MCF 10A (cell line): ENCODE measurements at regions of chr1 and their contacts with region 1.

Region 1: GRCh38 chr1:42958488-42959319 is at the start of gene SLC2A1:
- DNase-seq: peak; percentile 95
- H3K4me3 Mint-ChIP-seq: peak within 1 kb of the TSS; percentile 91
- H3K27ac Mint-ChIP-seq: peak within 1 kb of the TSS; percentile 93
- H3K4me1 Mint-ChIP-seq: peaks cover 39% of the 10 kb centered on the region
- H3K27me3 Mint-ChIP-seq: no peaks in the 10 kb centered on the region
- CTCF ChIP-seq: no peak
- total RNA-seq, gene SLC2A1: 87.5 and 95.0 TPM in 2 replicates

Region 2: DNA sequence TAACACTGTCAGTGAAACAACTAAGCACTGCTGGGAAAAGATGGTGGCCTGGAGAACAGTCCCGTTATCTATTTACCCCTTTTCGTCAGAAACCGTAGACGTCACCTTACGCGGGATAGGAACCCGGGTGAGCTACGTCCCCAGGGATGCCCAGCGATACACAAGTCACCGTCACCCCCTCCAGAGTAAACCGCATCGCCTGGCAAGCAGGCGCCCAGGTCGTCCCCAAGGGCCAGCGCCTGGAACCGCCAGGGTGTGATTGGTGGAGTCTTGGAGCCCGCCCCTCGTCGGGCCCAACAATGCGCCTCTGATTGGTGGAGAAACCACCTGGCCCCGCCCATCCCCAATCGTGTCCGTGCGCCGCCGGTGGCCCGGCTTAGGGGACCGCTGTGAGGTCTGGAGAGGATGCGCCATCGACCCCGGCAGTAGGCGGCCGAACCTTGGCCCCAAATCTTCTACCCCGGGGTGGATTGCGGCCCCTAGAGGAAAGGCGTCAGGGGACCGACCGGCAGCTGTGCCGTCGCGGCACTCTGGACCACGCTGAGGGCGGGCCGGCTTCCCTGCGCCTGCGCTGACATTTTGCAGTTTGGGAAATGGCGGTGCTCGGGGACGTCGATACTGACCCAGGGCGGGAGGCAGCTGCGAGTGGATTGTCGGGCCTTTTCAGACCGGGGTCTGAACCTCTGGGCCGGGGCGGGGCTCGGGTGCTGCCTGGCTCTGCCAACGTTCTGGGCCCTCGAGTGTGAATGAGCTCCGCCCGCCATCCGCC is 34.4 kb before region 1 on chr1:
- CTCF ChIA-PET with region 1: interaction called, 5 read pairs
- POLR2A ChIA-PET with region 1: interaction called, 16 read pairs
- intact Hi-C with region 1: loop called (anchors 5 kb)
- DNase-seq: no peak
- H3K4me3 Mint-ChIP-seq: peak overlapping the region; percentile 54
- H3K27ac Mint-ChIP-seq: no peak overlapping the region
- H3K4me1 Mint-ChIP-seq: peaks cover 18% of the 10 kb centered on the region
- H3K27me3 Mint-ChIP-seq: no peaks in the 10 kb centered on the region
- CTCF ChIP-seq: no peak

Region 3: GRCh38 chr1:42936309-42937078 is 22.2 kb before region 1 on chr1:
- CTCF ChIA-PET with region 1: interaction called, 14 read pairs
- POLR2A ChIA-PET with region 1: interaction called, 403 read pairs
- intact Hi-C with region 1: loop called (anchors 1 kb)
- DNase-seq: peak; percentile 94
- H3K4me3 Mint-ChIP-seq: peak overlapping the region; percentile 38
- H3K27ac Mint-ChIP-seq: peak overlapping the region; percentile 87
- H3K4me1 Mint-ChIP-seq: peaks cover 72% of the 10 kb centered on the region
- H3K27me3 Mint-ChIP-seq: no peaks in the 10 kb centered on the region
- CTCF ChIP-seq: no peak

Region 4: DNA sequence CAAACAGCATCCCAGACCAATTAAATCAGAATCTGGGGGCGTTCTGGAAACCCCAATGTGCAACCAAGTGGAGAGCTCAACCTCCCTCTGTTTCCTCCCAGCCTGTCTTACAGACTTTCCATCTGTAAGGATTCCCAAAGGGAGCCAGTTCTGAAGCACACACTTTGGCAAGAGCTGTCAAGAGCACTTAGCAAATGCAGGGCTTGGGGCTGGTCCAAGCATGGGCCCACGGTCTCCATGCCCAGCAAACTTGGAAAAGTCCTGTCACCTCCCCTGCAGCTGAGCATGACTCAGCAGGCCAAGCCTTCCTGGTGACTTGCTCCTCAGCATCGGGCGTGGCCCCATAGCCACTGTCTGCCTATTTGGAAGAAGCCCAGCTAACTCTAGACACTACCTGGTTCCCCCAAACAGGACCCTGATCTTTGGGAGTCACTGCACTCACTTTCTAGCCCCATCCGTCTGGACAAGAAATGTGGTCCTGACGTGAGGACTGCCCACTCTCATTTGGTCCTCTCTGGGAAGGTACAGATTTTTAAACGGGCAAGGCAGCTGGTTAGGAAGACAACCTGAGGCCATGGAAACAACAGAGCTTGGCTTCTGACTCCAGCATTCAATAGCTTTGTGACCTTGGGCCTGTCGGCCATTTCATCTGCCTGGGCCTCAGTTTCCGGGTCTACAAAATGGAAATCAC is 16.9 kb before region 1 on chr1:
- CTCF ChIA-PET with region 1: interaction called, 14 read pairs
- POLR2A ChIA-PET with region 1: interaction called, 403 read pairs
- intact Hi-C with region 1: loop called (anchors 1 kb)
- DNase-seq: peak; percentile 94
- H3K4me3 Mint-ChIP-seq: peak overlapping the region; percentile 54
- H3K27ac Mint-ChIP-seq: peak overlapping the region; percentile 58
- H3K4me1 Mint-ChIP-seq: peaks cover 78% of the 10 kb centered on the region
- H3K27me3 Mint-ChIP-seq: no peaks in the 10 kb centered on the region
- CTCF ChIP-seq: no peak

Region 5: GRCh38 chr1:43021547-43022474 is 63.1 kb after region 1 on chr1:
- CTCF ChIA-PET with region 1: interaction called, 3 read pairs
- POLR2A ChIA-PET with region 1: interaction called, 100 read pairs
- intact Hi-C with region 1: loop called (anchors 5 kb)
- DNase-seq: peak; percentile 95
- H3K4me3 Mint-ChIP-seq: peak overlapping the region; percentile 41
- H3K27ac Mint-ChIP-seq: no peak overlapping the region
- H3K4me1 Mint-ChIP-seq: peaks cover 25% of the 10 kb centered on the region
- H3K27me3 Mint-ChIP-seq: no peaks in the 10 kb centered on the region
- CTCF ChIP-seq: no peak

Region 6: GRCh38 chr1:43048601-43049011 is 89.9 kb after region 1 on chr1:
- CTCF ChIA-PET with region 1: no interaction called
- POLR2A ChIA-PET with region 1: interaction called, 10 read pairs
- intact Hi-C with region 1: no loop called
- DNase-seq: peak; percentile 79
- H3K4me3 Mint-ChIP-seq: no peak overlapping the region
- H3K27ac Mint-ChIP-seq: no peak overlapping the region
- H3K4me1 Mint-ChIP-seq: peaks cover 15% of the 10 kb centered on the region
- H3K27me3 Mint-ChIP-seq: no peaks in the 10 kb centered on the region
- CTCF ChIP-seq: no peak